Activated CD4-positive, alpha-beta T cell treated with anti-CD3 and anti-CD28 coated beads for 36 hours (primary cell): ENCODE measurements at regions of chr2 and their contacts with region 1.

Region 1: GRCh38 chr2:207746131-207746530 is 23.6 kb downstream of the FZD5 start:
- DNase-seq: peak; percentile 68
- ATAC-seq: peak; percentile 85
- H3K4me3 Mint-ChIP-seq: no peak overlapping the region
- H3K27ac Mint-ChIP-seq: no peak overlapping the region
- H3K4me1 Mint-ChIP-seq: no peaks in the 10 kb centered on the region
- H3K27me3 Mint-ChIP-seq: no peaks in the 10 kb centered on the region

Region 2: DNA sequence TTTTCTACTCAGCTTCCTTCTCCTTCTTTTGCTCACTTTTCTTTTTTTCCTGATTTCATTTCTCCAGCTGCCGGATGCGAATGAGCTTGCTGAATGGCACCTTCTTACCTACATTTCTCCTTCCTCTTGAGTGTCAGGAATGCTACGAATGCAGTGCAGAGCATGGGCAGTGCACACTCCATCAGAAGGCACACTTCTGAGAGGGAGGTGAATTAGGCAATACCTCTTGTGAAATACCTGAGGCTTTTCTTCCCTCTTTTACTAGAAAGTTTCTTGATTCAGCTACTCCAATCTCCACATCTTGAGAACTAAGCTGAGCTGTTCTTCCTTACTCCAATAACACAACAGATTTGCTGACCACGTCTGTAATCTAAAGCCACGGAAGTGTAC is 228.1 kb after region 1 on chr2:
- CTCF ChIA-PET with region 1: interaction called, 7 read pairs
- POLR2A ChIA-PET with region 1: no interaction called
- intact Hi-C with region 1: loop called (anchors 1 kb)
- DNase-seq: no peak
- ATAC-seq: no peak
- H3K4me3 Mint-ChIP-seq: no peak overlapping the region
- H3K27ac Mint-ChIP-seq: no peak overlapping the region
- H3K4me1 Mint-ChIP-seq: peaks cover 22% of the 10 kb centered on the region
- H3K27me3 Mint-ChIP-seq: no peaks in the 10 kb centered on the region

Region 3: GRCh38 chr2:208047840-208048239 is 301.7 kb after region 1 on chr2:
- CTCF ChIA-PET with region 1: interaction called, 12 read pairs
- POLR2A ChIA-PET with region 1: interaction called, 3 read pairs
- intact Hi-C with region 1: no loop called
- DNase-seq: no peak
- ATAC-seq: no peak
- H3K4me3 Mint-ChIP-seq: no peak overlapping the region
- H3K27ac Mint-ChIP-seq: no peak overlapping the region
- H3K4me1 Mint-ChIP-seq: no peaks in the 10 kb centered on the region
- H3K27me3 Mint-ChIP-seq: peaks cover 6% of the 10 kb centered on the region

Region 4: GRCh38 chr2:208072250-208072892 is 326.2 kb after region 1 on chr2:
- CTCF ChIA-PET with region 1: interaction called, 36 read pairs
- POLR2A ChIA-PET with region 1: no interaction called
- intact Hi-C with region 1: loop called (anchors 1 to 5 kb)
- DNase-seq: peak; percentile 71
- ATAC-seq: peak; percentile 82
- H3K4me3 Mint-ChIP-seq: no peak overlapping the region
- H3K27ac Mint-ChIP-seq: no peak overlapping the region
- H3K4me1 Mint-ChIP-seq: no peaks in the 10 kb centered on the region
- H3K27me3 Mint-ChIP-seq: peaks cover 2% of the 10 kb centered on the region